Lower leg skin (tissue), 4 donors: ENCODE measurements at regions of chr3 and their contacts with region 1.

Region 1: DNA sequence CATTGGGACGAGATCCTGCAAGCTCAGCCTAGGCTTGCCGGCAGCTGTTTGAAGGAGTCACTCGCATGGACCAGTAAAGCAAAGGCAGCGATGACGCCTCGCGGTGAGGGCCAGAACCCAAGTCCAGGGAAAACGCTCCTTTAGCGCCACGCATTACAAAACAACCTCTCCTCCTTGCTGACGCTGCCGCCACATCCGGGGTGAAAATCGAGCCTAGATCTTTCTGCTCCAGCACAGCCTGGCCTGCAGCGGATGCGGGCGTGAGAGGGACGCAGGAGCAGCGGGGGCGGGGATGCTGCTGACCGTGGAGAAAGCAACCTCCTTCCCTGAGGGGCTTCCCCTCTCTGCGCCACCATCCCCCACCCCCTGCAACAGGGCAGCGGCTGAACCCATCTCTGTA is 46.7 kb downstream of the CASR start:
- DNase-seq: no peak
- H3K4me3 ChIP-seq: no peak overlapping the region
- CTCF ChIP-seq: no peak
- POLR2A ChIP-seq: no peak

Region 2: DNA sequence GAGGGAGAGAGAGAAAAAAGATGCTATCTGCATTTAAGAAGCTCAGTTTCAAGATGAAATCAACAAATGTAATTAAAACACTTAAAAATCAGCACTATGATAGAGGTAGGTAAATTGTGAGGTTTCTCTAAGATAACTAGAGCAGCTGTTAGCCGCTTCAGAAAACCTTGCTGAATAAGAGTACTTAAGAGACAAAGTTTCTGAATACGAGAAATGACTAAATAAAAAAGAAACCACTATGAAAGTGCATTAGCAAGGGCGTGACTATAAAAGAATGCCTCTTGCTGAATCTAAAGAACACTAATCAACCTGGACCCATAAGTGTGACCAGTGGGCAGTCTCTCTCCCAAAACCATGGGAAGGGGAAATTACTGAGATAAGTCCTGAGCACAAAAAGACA is 437.1 kb before region 1 on chr3:
- intact Hi-C with region 1: no loop called
- DNase-seq: no peak
- H3K4me3 ChIP-seq: no peak overlapping the region
- CTCF ChIP-seq: no peak
- POLR2A ChIP-seq: no peak

Region 3: DNA sequence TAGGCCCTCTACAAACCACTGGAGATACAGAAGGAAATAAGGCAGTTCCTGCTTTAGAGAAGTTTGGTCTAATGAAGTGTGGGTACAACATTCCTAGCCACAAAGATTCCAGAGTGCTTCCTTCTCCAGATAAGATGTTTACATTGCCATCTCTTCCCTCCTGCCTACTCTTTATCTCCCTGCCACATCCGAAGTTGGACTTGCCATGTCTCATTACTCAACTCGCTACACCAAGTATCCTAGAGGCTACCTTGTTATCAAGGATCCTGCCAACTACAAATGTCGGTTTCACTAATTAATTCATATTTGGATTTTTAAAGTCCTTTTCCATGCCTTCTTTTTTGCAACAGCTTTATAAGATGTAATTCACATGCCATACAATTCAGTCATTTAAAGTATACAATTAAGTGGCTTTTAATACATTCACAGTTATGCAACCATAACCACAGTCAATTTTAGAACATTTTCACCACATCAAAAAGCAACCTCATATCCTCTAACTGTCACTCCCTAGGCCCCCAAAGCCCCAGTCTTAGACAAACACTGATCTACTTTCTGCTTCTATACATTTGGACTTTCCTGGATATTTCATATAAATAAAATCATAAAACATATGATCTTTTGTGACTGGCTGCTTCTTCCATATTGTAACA is 41.2 kb after region 1 on chr3:
- intact Hi-C with region 1: no loop called
- DNase-seq: no peak
- H3K4me3 ChIP-seq: no peak overlapping the region
- CTCF ChIP-seq: no peak
- POLR2A ChIP-seq: no peak

Region 4: GRCh38 chr3:122295266-122296062 is 65.3 kb after region 1 on chr3:
- intact Hi-C with region 1: loop called (anchors 2 kb)
- DNase-seq: no peak
- H3K4me3 ChIP-seq: no peak overlapping the region
- CTCF ChIP-seq: no peak
- POLR2A ChIP-seq: no peak

Region 5: GRCh38 chr3:122519693-122520092 is 289.5 kb after region 1 on chr3:
- intact Hi-C with region 1: no loop called
- DNase-seq: no peak
- H3K4me3 ChIP-seq: no peak overlapping the region
- CTCF ChIP-seq: no peak
- POLR2A ChIP-seq: no peak

Region 6: DNA sequence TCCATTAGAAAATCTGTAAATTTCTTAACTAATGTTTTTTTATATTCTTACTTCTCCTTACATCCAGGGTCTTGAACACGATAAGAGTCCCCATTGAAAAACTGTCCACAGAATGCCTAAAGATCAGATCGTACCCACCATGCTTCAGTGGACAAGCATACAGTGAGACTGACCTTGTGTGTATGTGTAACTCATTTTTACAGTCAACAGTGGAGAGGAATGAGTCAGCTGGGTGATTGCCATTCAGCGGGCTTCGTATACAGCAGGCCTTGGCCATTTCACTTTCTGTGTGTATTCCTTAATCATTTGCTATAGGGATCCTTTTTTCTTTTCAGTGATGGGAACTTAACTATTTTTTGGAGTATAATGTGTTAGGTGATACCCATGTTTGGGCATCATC is 461.0 kb after region 1 on chr3:
- intact Hi-C with region 1: no loop called
- DNase-seq: no peak
- H3K4me3 ChIP-seq: no peak overlapping the region
- CTCF ChIP-seq: no peak
- POLR2A ChIP-seq: no peak